ENCODE measurements at regions of chr19 and their contacts with region 1.

Region 1: GRCh38 chr19:38402967-38403861 is at the start of gene FAM98C:
- DNase-seq: peak; percentile 98
- H3K4me3 ChIP-seq: peak within 1 kb of the TSS; percentile 64 to 98 (median 76)
- H3K27ac ChIP-seq: peak within 1 kb of the TSS; percentile 79 to 88 (median 84)
- H3K4me1 ChIP-seq: peaks cover 0 to 15% (median 7%) of the 10 kb centered on the region in 4 donors
- H3K27me3 ChIP-seq: peaks cover 12 to 30% (median 28%) of the 10 kb centered on the region in 3 donors
- CTCF ChIP-seq: peak; percentile 92 to 96 (median 94)
- EP300 ChIP-seq: no peak
- POLR2A ChIP-seq: no peak
- total RNA-seq, gene FAM98C: 17.2 to 27.2 (median 18.6) TPM

Region 2: GRCh38 chr19:38374429-38375176 is 28.6 kb before region 1 on chr19 and contains the start of gene PSMD8:
- intact Hi-C with region 1: no loop called
- DNase-seq: peak; percentile 100
- H3K4me3 ChIP-seq: peak within 1 kb of the TSS; percentile 70 to 84 (median 77)
- H3K27ac ChIP-seq: peak within 1 kb of the TSS; percentile 86 to 93 (median 90)
- H3K4me1 ChIP-seq: peaks cover 0 to 26% (median 22%) of the 10 kb centered on the region in 4 donors
- H3K27me3 ChIP-seq: peaks cover 0 to 4% (median 0%) of the 10 kb centered on the region in 3 donors
- CTCF ChIP-seq: no peak
- EP300 ChIP-seq: peak in 1 of 4 donors; percentile 52
- POLR2A ChIP-seq: peak; percentile 88 to 90
- total RNA-seq, gene PSMD8: 129 to 271 (median 158) TPM

Region 3: GRCh38 chr19:38384652-38385051 is 18.6 kb before region 1 on chr19:
- intact Hi-C with region 1: no loop called
- DNase-seq: no peak
- H3K4me3 ChIP-seq: no peak overlapping the region
- H3K27ac ChIP-seq: no peak overlapping the region
- H3K4me1 ChIP-seq: peaks cover 0 to 37% (median 33%) of the 10 kb centered on the region in 4 donors
- H3K27me3 ChIP-seq: peaks cover 15 to 95% (median 91%) of the 10 kb centered on the region in 3 donors
- CTCF ChIP-seq: no peak
- EP300 ChIP-seq: no peak
- POLR2A ChIP-seq: no peak

Region 4: DNA sequence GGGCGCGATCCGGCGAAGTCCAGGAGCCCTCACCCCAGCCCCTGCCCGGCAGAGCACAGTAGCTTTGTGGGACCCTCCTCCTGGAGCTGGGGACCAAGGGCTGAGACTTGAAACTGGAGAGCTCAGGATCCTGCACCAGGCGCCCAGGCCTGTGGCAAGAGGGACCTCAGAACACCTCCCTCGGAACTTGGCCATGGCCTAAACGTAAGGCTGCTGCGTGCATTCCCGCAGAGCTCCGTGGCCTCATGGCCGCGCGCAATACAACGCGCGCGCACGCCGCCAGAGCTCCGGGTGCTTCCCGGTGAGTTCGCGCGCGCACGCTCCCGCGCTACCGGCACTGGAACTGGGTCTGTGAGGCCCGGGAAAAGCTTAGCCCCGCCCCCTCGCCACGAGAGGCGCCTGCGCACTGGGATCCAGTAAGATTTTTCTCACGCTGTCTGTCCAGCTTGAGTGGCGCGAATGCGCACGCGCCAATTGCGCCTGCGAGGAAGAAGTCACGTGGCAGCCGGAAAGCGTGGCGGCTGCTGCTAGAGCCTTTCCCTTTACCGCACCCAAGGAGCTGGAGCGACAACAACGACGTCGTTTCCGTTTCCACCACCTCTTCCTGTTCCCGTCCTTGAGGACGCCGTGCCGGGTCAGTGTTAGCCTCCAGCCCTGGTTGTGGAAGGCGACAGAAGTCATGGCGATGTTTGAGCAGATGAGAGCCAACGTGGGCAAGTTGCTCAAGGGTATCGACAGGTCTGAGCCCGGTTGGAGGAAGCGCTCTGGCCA is 215.6 kb after region 1 on chr19 and contains the start of gene EIF3K:
- intact Hi-C with region 1: loop called (anchors 5 kb)
- DNase-seq: peak; percentile 99
- H3K4me3 ChIP-seq: peak within 1 kb of the TSS; percentile 81 to 98 (median 84)
- H3K27ac ChIP-seq: peak within 1 kb of the TSS; percentile 85 to 94 (median 89)
- H3K4me1 ChIP-seq: peaks cover 0 to 24% (median 19%) of the 10 kb centered on the region in 4 donors
- H3K27me3 ChIP-seq: no peaks in the 10 kb centered on the region
- CTCF ChIP-seq: no peak
- EP300 ChIP-seq: peak in 1 of 4 donors; percentile 89
- POLR2A ChIP-seq: peak; percentile 69 to 76
- total RNA-seq, gene EIF3K: 469 to 803 (median 546) TPM

Region 5: GRCh38 chr19:38634757-38635482 is 231.7 kb after region 1 on chr19:
- intact Hi-C with region 1: loop called (anchors 1 kb)
- DNase-seq: peak; percentile 84
- H3K4me3 ChIP-seq: no peak overlapping the region
- H3K27ac ChIP-seq: peak overlapping the region; percentile 2 to 59 (median 54)
- H3K4me1 ChIP-seq: peaks cover 0 to 6% (median 0%) of the 10 kb centered on the region in 4 donors
- H3K27me3 ChIP-seq: no peaks in the 10 kb centered on the region
- CTCF ChIP-seq: peak; percentile 87 to 95 (median 90)
- EP300 ChIP-seq: no peak
- POLR2A ChIP-seq: no peak